Left ventricle myocardium superior (tissue), 1 donor: ENCODE measurements at regions of chr20 and their contacts with region 1.

Region 1: GRCh38 chr20:59782986-59783640 is 150.3 kb downstream of the SYCP2 start:
- DNase-seq: peak; percentile 78
- ATAC-seq: peak; percentile 71

Region 2: GRCh38 chr20:59850018-59850641 is 67.0 kb after region 1 on chr20:
- intact Hi-C with region 1: loop called (anchors 2 kb)
- DNase-seq: no peak
- ATAC-seq: peak; percentile 35